HepG2 (cell line): ENCODE measurements at regions of chr15 and their contacts with region 1.

Region 1: GRCh38 chr15:73081321-73081958 is 29.2 kb downstream of the NEO1 start:
- DNase-seq: peak; percentile 41
- ATAC-seq: peak; percentile 55; the same call in 2 of the 3 replicates
- H3K4me3 ChIP-seq: no peak overlapping the region
- H3K27ac ChIP-seq: no peak overlapping the region
- H3K4me1 ChIP-seq: peaks cover 12% of the 10 kb centered on the region
- H3K27me3 ChIP-seq: no peaks in the 10 kb centered on the region
- CTCF ChIP-seq: peak; percentile 66
- EP300 ChIP-seq: no peak
- POLR2A ChIP-seq: no peak
- RAD21 ChIP-seq: no peak

Region 2: DNA sequence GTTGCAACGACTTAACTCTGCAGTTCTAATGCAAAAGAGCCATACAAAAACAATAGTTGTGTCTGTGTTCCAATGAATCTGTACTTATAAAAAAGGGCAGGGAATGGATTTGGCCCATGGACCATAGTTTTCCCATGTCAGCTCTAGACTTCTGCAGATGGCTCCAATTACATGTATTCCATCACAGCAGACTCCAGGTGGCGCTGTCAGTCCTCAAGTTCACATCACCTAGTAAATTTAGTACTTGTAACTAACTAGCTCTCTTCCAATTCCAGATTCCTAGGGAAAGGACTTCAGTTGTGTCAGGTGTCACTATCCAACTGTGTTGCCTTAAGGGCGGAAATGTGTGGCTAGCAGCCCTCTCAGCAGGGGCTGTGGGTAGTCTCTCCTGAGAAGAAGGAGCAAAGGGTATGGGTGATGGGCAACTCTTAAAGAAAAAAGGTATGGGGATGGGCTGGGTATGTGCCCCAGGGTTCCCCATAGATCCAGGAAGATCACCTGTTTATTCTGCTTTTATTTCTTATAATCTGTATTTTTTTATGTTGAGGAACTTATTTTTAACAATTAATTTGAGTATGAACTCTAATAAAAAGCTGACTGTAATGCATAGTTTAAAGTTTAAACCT is 359.3 kb before region 1 on chr15:
- CTCF ChIA-PET with region 1: interaction called, 13 read pairs
- POLR2A ChIA-PET with region 1: no interaction called
- in situ Hi-C with region 1: no loop called
- intact Hi-C with region 1: loop called (anchors 2 kb)
- DNase-seq: peak; percentile 56
- ATAC-seq: peak; percentile 57
- H3K4me3 ChIP-seq: no peak overlapping the region
- H3K27ac ChIP-seq: no peak overlapping the region
- H3K4me1 ChIP-seq: peaks cover 13% of the 10 kb centered on the region
- H3K27me3 ChIP-seq: no peaks in the 10 kb centered on the region
- CTCF ChIP-seq: peak; percentile 82
- EP300 ChIP-seq: no peak
- POLR2A ChIP-seq: no peak
- RAD21 ChIP-seq: peak; percentile 38

Region 3: GRCh38 chr15:72796515-72797337 is 284.7 kb before region 1 on chr15:
- CTCF ChIA-PET with region 1: interaction called, 16 read pairs
- POLR2A ChIA-PET with region 1: no interaction called
- in situ Hi-C with region 1: loop called (anchors 5 kb)
- intact Hi-C with region 1: loop called (anchors 1 kb)
- DNase-seq: no peak
- ATAC-seq: peak; percentile 96
- H3K4me3 ChIP-seq: peak overlapping the region; percentile 56 to 81 (median 65)
- H3K27ac ChIP-seq: no peak overlapping the region
- H3K4me1 ChIP-seq: peaks cover 10% of the 10 kb centered on the region; the same call in 1 of the 2 replicates
- H3K27me3 ChIP-seq: peaks cover 1 to 14% of the 10 kb centered on the region in 2 experiments; a peak in 4 of 5 replicates
- CTCF ChIP-seq: peak; percentile 54; the same call in 1 of the 2 replicates
- EP300 ChIP-seq: no peak
- POLR2A ChIP-seq: no peak
- RAD21 ChIP-seq: peak; percentile 82

Region 4: DNA sequence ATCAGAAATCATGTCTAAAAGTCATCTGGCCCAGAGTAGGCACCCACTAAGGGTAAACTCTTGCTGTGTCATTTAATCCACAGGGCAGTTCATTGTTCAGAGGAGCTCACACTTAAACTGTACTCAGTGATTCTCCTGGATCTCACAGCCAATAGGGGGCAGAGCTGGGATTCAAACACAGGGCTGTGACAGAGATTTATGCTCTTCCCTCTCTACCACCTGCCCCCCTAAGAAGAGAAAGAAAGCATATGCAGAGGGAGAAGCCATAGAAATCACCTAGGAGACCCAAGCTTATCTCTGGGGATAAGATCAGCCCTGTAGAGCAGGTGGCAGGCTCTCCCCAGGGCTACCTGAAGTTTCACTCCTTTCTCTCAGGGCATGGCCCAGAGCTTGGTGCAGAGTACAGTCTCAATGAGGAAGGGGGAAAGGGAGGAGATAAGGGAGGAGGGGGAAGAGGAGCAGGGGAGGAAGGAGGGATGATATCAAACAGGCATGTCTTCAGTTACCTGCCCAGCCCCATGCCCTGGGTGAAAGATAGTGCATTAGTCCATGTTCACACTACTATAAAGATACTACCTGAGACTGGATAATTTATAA is 246.0 kb before region 1 on chr15:
- CTCF ChIA-PET with region 1: interaction called, 4 read pairs
- POLR2A ChIA-PET with region 1: no interaction called
- in situ Hi-C with region 1: no loop called
- intact Hi-C with region 1: loop called (anchors 2 kb)
- DNase-seq: peak; percentile 4
- ATAC-seq: peak; percentile 44; the same call in 1 of the 3 replicates
- H3K4me3 ChIP-seq: no peak overlapping the region
- H3K27ac ChIP-seq: no peak overlapping the region
- H3K4me1 ChIP-seq: no peaks in the 10 kb centered on the region
- H3K27me3 ChIP-seq: no peaks in the 10 kb centered on the region; a peak in 1 of 5 replicates
- CTCF ChIP-seq: 0 out of 2 replicates have a peak, but pooled peaks have one; percentile 16
- EP300 ChIP-seq: no peak
- POLR2A ChIP-seq: no peak
- RAD21 ChIP-seq: no peak

Region 5: GRCh38 chr15:73051811-73052678 is 29.4 kb before region 1 on chr15 and contains the start of gene NEO1:
- CTCF ChIA-PET with region 1: no interaction called
- POLR2A ChIA-PET with region 1: no interaction called
- in situ Hi-C with region 1: no loop called
- intact Hi-C with region 1: loop called (anchors 2 kb)
- DNase-seq: peak; percentile 59
- ATAC-seq: peak; percentile 87
- H3K4me3 ChIP-seq: peak within 1 kb of the TSS; percentile 82 to 92 (median 88)
- H3K27ac ChIP-seq: peak within 1 kb of the TSS; percentile 80
- H3K4me1 ChIP-seq: peaks cover 14% of the 10 kb centered on the region
- H3K27me3 ChIP-seq: peaks cover 0 to 11% of the 10 kb centered on the region in 2 experiments; a peak in 2 of 5 replicates
- CTCF ChIP-seq: no peak
- EP300 ChIP-seq: no peak
- POLR2A ChIP-seq: peak; percentile 28 to 37; a peak in 2 of 4 replicates
- RAD21 ChIP-seq: no peak
- total RNA-seq, gene NEO1: 10.0 and 11.0 TPM in 2 replicates

Region 6: GRCh38 chr15:73258271-73259108 is 177.1 kb after region 1 on chr15:
- CTCF ChIA-PET with region 1: no interaction called
- POLR2A ChIA-PET with region 1: no interaction called
- in situ Hi-C with region 1: no loop called
- intact Hi-C with region 1: no loop called
- DNase-seq: no peak
- ATAC-seq: no peak
- H3K4me3 ChIP-seq: no peak overlapping the region
- H3K27ac ChIP-seq: no peak overlapping the region
- H3K4me1 ChIP-seq: no peaks in the 10 kb centered on the region
- H3K27me3 ChIP-seq: no peaks in the 10 kb centered on the region
- CTCF ChIP-seq: no peak
- EP300 ChIP-seq: no peak
- POLR2A ChIP-seq: no peak
- RAD21 ChIP-seq: no peak